ENCODE measurements at regions of chr10 and their contacts with region 1.

Region 1: DNA sequence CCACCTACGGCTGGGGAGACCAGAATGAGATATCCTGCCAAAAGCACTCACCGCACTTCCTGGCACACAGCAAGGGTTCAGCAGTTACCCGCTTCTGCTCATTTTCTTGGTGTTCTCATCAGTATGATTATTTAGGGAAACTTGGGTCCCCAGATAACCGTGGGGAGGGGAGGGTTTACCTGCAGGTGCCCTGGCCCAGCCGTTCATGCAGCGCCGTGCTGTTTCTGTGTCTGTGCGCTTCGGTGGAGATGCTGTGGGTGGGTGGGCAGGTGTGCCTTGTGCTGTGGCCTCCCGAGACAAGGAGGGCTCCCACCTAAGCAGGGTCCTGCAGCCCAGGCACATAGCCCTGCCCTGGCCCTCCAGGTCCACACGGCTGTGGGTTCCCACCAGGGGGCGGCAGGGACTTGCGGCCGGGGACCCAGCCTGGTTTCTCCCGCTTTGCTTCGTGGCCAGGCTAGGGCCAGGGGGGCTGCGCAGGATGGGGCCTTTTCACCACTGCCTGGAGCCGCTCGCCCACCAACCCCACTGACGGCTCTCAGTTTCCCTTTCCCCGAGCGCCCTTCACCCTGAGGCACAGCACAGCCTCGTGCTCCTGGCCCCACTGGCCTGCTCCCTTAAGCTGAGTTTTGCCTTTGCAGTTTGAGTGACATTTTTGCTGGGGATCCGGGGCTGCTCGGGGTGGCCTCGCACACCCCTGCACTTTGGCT is 78.5 kb downstream of the LHPP start:
- DNase-seq: peak; percentile 67
- H3K4me3 ChIP-seq: no peak overlapping the region
- H3K27ac ChIP-seq: no peak overlapping the region
- H3K4me1 ChIP-seq: peaks cover 0 to 7% (median 3%) of the 10 kb centered on the region in 4 donors
- H3K27me3 ChIP-seq: no peaks in the 10 kb centered on the region
- CTCF ChIP-seq: peak; percentile 58 to 75 (median 70)
- EP300 ChIP-seq: no peak
- POLR2A ChIP-seq: no peak

Region 2: DNA sequence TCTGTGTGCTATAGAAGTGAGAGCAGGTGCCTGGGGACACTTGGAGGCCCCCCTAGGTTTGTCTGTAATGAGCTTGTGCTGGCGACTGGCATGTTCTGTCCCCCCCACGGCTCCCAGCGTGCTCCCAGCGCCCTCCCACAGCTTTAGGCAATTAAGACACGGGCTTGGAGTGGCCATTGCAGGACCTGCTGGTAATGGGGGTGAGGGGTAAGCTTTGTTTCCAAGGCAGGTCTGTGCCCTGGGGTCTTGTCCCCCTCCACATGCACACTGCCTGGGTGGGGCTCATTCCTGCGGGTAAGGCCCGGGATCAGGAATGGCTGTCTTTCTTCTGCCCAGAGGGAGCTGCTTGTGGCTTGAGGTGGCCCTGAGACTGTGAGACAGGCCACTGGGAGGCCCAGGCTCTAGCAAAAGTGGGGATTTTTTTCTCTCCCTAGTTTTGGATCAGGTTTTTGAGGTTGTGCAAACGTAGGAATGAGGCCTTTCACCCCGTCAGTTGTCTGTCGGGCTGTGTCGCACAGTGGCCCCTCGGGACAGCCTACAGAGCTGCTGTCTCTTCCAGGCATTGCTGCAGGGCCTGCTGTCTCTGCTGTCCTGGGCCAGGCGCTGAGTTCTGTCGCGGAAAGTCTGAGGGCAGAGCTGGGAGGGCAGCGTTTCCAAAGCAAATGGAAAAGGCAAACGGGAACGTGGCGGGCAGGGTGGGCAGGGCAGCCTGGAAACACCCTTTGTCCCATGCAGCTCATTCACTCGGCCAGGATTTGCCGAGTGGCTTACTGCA is 28.9 kb after region 1 on chr10:
- in situ Hi-C with region 1: no loop called
- intact Hi-C with region 1: no loop called
- DNase-seq: no peak
- H3K4me3 ChIP-seq: no peak overlapping the region
- H3K27ac ChIP-seq: no peak overlapping the region
- H3K4me1 ChIP-seq: no peaks in the 10 kb centered on the region
- H3K27me3 ChIP-seq: no peaks in the 10 kb centered on the region
- CTCF ChIP-seq: no peak
- EP300 ChIP-seq: no peak
- POLR2A ChIP-seq: no peak

Region 3: DNA sequence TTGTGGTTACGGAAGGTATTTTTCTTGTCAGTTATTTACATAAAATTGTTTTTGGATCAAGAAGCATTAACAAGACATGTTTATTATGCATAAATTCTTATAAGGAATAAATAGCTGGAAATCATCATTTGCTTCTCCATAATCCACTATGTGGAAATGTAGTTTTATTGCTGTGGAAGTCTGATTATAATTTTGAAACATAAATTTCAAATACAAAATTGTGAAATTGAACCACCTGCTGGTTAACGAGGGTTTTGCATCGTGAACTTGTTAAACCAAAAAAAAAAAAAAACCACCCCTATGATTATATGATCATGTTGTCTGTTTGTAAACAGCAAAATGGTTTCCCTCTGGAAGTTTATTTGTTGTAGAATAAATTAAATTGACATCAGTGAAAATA is 287.4 kb after region 1 on chr10:
- in situ Hi-C with region 1: loop called in 3 of 4 experiments (anchors 10 to 25 kb)
- intact Hi-C with region 1: loop called (anchors 10 kb)
- DNase-seq: no peak
- H3K4me3 ChIP-seq: no peak overlapping the region
- H3K27ac ChIP-seq: no peak overlapping the region
- H3K4me1 ChIP-seq: no peaks in the 10 kb centered on the region
- H3K27me3 ChIP-seq: no peaks in the 10 kb centered on the region
- CTCF ChIP-seq: peak; percentile 50 to 67 (median 57)
- EP300 ChIP-seq: no peak
- POLR2A ChIP-seq: no peak

Region 4: GRCh38 chr10:126036515-126036914 is 1496.4 kb after region 1 on chr10:
- in situ Hi-C with region 1: no loop called
- intact Hi-C with region 1: no loop called
- DNase-seq: no peak
- H3K4me3 ChIP-seq: no peak overlapping the region
- H3K27ac ChIP-seq: no peak overlapping the region
- H3K4me1 ChIP-seq: no peaks in the 10 kb centered on the region
- H3K27me3 ChIP-seq: no peaks in the 10 kb centered on the region
- CTCF ChIP-seq: no peak
- EP300 ChIP-seq: no peak
- POLR2A ChIP-seq: no peak